ENCODE measurements at regions of chr15 and their contacts with region 1.

Region 1: GRCh38 chr15:82999905-83000671 is 11.4 kb downstream of the C15orf40 start:
- DNase-seq: peak in 5 of 7 donors; percentile 26 to 48 (median 31)
- H3K4me3 ChIP-seq: peak overlapping the region in 2 of 4 donors; percentile 14 to 41
- H3K27ac ChIP-seq: peak overlapping the region in 3 of 5 donors; percentile 53 to 71 (median 63)
- H3K4me1 ChIP-seq: peaks cover 0 to 4% of the 10 kb centered on the region in 2 donors
- H3K27me3 ChIP-seq: no peaks in the 10 kb centered on the region
- CTCF ChIP-seq: peak; percentile 25 to 78 (median 68)
- POLR2A ChIP-seq: no peak

Region 2: GRCh38 chr15:82530606-82531379 is 469.3 kb before region 1 on chr15:
- intact Hi-C with region 1: loop called in 1 of 2 experiments (anchors 10 kb)
- DNase-seq: peak; percentile 63 to 88 (median 70)
- H3K4me3 ChIP-seq: no peak overlapping the region
- H3K27ac ChIP-seq: peak overlapping the region in 1 of 5 donors; percentile 33
- H3K4me1 ChIP-seq: no peaks in the 10 kb centered on the region
- H3K27me3 ChIP-seq: no peaks in the 10 kb centered on the region
- CTCF ChIP-seq: peak; percentile 74 to 89 (median 78)
- POLR2A ChIP-seq: no peak

Region 3: DNA sequence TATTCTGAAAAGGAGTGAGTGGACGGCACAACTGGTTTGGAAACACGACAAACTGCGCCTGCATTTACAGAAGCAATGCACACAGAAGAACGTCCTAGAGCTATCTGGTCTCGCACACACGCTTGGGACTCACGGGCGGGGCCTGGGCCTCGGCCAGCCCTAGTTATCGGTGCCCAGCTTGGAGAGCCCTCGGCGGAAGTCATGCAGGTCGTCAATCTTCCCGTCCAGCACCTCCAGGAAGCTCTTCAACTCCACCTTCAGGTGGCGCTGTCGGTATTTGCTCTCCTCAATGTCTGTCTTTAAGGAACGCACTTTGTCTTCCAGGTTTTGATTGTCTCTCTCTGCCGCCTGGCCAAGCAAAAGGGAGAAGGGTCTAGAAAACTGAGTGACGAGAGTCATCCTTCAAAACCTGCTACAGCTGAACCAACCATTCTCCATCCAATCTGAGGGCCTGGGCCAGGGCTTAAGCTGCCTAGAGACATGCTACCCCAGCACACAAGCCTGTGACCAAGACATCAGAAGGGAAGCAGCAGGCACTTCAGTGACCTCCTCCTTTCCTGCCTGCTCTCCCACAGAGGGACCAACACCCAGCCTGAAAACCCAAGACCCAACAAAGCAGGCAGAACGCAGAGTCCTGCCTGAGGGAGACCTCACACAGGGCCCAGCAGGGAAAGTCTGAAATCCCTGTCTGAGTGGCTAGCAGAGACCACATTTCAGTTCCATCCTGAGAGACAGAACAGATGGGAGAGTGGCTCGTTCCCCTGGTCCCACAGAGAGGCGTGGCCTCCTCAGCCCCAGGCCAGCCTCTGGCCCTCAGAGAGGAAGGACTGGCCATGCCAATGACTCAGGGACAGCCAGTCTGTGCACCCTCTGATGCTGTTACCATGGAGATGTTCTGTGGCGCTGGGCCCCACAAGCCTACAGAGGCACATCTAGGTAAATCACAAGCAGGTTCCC is 150.3 kb before region 1 on chr15:
- intact Hi-C with region 1: loop called in 1 of 2 experiments (anchors 5 kb)
- DNase-seq: peak; percentile 87 to 95 (median 93)
- H3K4me3 ChIP-seq: no peak overlapping the region
- H3K27ac ChIP-seq: peak overlapping the region; percentile 22 to 87 (median 65)
- H3K4me1 ChIP-seq: peaks cover 2 to 20% of the 10 kb centered on the region in 2 donors
- H3K27me3 ChIP-seq: no peaks in the 10 kb centered on the region
- CTCF ChIP-seq: peak; percentile 68 to 91 (median 86)
- POLR2A ChIP-seq: peak in 1 of 2 donors; percentile 21

Measured in adrenal gland (tissue), 19 donors.